Spleen (tissue), 13 donors: ENCODE measurements at regions of chr4 and their contacts with region 1.

Region 1: GRCh38 chr4:37802068-37802666 is 24.3 kb upstream of the PGM2 start:
- DNase-seq: no peak
- H3K4me3 ChIP-seq: no peak overlapping the region
- H3K27ac ChIP-seq: no peak overlapping the region
- H3K4me1 ChIP-seq: peaks cover 0 to 13% (median 5%) of the 10 kb centered on the region in 6 donors
- H3K27me3 ChIP-seq: no peaks in the 10 kb centered on the region
- CTCF ChIP-seq: peak in 9 of 11 experiments; percentile 16 to 73 (median 52)
- POLR2A ChIP-seq: no peak

Region 2: DNA sequence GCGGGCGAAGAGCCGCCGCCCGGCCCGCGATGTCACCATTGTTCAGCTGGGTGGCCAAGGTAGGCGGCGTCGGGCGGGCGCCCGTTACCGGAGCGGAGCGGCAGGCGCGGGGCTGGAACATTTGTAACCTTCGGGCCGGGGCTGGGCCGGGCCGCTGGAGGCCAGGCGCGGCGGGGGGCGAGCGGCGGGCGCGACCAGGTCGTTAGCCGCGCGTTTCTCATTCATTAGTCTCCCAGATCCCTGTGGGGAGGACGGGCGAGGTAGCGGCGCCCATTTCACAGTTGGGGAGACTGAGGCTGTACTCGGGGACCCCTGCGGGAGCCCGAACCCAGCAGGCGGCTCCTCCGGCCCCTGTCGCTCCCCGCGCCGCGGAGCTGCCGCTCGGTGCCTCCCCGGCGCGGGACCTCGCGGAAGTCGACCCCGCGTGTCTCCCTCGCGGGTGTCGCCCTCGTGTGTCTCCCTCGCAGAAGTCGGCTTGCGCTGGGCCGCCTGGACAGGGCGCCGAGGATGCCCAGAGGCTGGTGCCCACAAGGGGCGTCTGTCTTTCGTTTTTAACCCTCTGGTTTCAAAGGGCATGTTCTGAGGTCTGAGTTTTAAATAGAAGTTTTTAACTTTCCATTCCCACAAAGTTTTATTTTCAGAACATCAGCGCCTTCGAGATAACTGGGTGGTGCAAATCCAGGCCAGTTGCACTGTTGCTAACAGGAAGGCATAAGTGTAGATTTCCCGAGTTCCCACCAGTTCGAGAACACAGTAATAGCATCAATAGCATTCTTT is 175.5 kb after region 1 on chr4:
- intact Hi-C with region 1: loop called (anchors 10 kb)
- DNase-seq: peak; percentile 97
- H3K4me3 ChIP-seq: peak overlapping the region; percentile 69 to 94 (median 78)
- H3K27ac ChIP-seq: peak overlapping the region; percentile 91 to 99 (median 96)
- H3K4me1 ChIP-seq: peaks cover 17 to 58% (median 46%) of the 10 kb centered on the region in 6 donors
- H3K27me3 ChIP-seq: no peaks in the 10 kb centered on the region
- CTCF ChIP-seq: peak; percentile 48 to 93 (median 76)
- POLR2A ChIP-seq: no peak

Region 3: GRCh38 chr4:38034986-38035882 is 233.1 kb after region 1 on chr4:
- intact Hi-C with region 1: loop called (anchors 2 kb)
- DNase-seq: no peak
- H3K4me3 ChIP-seq: no peak overlapping the region
- H3K27ac ChIP-seq: no peak overlapping the region
- H3K4me1 ChIP-seq: no peaks in the 10 kb centered on the region
- H3K27me3 ChIP-seq: no peaks in the 10 kb centered on the region
- CTCF ChIP-seq: peak; percentile 29 to 82 (median 77)
- POLR2A ChIP-seq: no peak